ENCODE measurements at regions of chr3 and their contacts with region 1.

Region 1: GRCh38 chr3:72821161-72821781 is 27.0 kb downstream of the SHQ1 start:
- DNase-seq: no peak
- ATAC-seq: peak; percentile 56
- H3K4me3 ChIP-seq: no peak overlapping the region
- H3K27ac ChIP-seq: no peak overlapping the region
- H3K4me1 ChIP-seq: peaks cover 24% of the 10 kb centered on the region
- H3K27me3 ChIP-seq: no peaks in the 10 kb centered on the region
- CTCF ChIP-seq: no peak

Region 2: GRCh38 chr3:71875461-71875947 is 945.8 kb before region 1 on chr3:
- intact Hi-C with region 1: loop called (anchors 10 kb)
- DNase-seq: peak; percentile 84
- ATAC-seq: peak; percentile 98
- H3K4me3 ChIP-seq: no peak overlapping the region
- H3K27ac ChIP-seq: no peak overlapping the region
- H3K4me1 ChIP-seq: peaks cover 6% of the 10 kb centered on the region
- H3K27me3 ChIP-seq: no peaks in the 10 kb centered on the region
- CTCF ChIP-seq: peak; percentile 93

Region 3: GRCh38 chr3:72914383-72914782 is 93.1 kb after region 1 on chr3:
- intact Hi-C with region 1: no loop called
- DNase-seq: no peak
- ATAC-seq: no peak
- H3K4me3 ChIP-seq: no peak overlapping the region
- H3K27ac ChIP-seq: no peak overlapping the region
- H3K4me1 ChIP-seq: no peaks in the 10 kb centered on the region
- H3K27me3 ChIP-seq: no peaks in the 10 kb centered on the region
- CTCF ChIP-seq: no peak

Measured in upper lobe of right lung (tissue), 1 donor.